Activated naive CD4-positive, alpha-beta T cell treated with anti-CD3 and anti-CD28 coated beads for 36 hours (primary cell): ENCODE measurements at regions of chr14 and their contacts with region 1.

Region 1: GRCh38 chr14:63543000-63543825 is at the start of gene PPP2R5E:
- DNase-seq: peak; percentile 99
- H3K4me3 Mint-ChIP-seq: peak within 1 kb of the TSS; percentile 96
- H3K27ac Mint-ChIP-seq: peak within 1 kb of the TSS; percentile 83
- H3K4me1 Mint-ChIP-seq: peaks cover 25% of the 10 kb centered on the region
- H3K27me3 Mint-ChIP-seq: no peaks in the 10 kb centered on the region
- total RNA-seq, gene PPP2R5E: 30.0 to 32.5 TPM

Region 2: GRCh38 chr14:63388763-63389431 is 154.3 kb before region 1 on chr14:
- CTCF ChIA-PET with region 1: interaction called, 5 read pairs
- intact Hi-C with region 1: loop called (anchors 1 kb)
- DNase-seq: peak; percentile 76
- H3K4me3 Mint-ChIP-seq: no peak overlapping the region
- H3K27ac Mint-ChIP-seq: no peak overlapping the region
- H3K4me1 Mint-ChIP-seq: no peaks in the 10 kb centered on the region
- H3K27me3 Mint-ChIP-seq: no peaks in the 10 kb centered on the region

Region 3: GRCh38 chr14:63470962-63471793 is 72.0 kb before region 1 on chr14:
- CTCF ChIA-PET with region 1: interaction called, 3 read pairs
- intact Hi-C with region 1: loop called (anchors 2 kb)
- DNase-seq: no peak
- H3K4me3 Mint-ChIP-seq: no peak overlapping the region
- H3K27ac Mint-ChIP-seq: no peak overlapping the region
- H3K4me1 Mint-ChIP-seq: peaks cover 60% of the 10 kb centered on the region
- H3K27me3 Mint-ChIP-seq: no peaks in the 10 kb centered on the region

Region 4: DNA sequence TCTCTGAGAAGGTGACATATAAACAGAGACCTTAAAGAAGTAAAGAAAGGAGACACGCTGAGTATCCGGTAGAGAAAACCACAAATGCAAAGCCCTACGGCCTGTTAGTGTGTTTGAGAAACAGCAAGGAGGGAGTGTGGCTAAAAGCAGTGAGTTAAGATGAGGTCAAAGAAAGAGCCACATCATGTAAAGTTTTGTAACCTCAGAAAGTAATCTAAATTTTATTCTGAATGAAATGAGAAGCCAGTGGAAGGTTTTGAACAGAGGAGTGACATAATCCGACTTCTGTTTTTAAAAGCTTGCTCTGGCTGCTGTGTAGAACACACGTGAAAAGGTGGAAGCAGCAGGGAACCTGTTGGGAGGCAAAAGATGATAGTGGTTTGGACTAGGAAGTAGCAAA is 32.7 kb before region 1 on chr14:
- CTCF ChIA-PET with region 1: interaction called, 3 read pairs
- intact Hi-C with region 1: loop called (anchors 2 kb)
- DNase-seq: peak; percentile 14
- H3K4me3 Mint-ChIP-seq: no peak overlapping the region
- H3K27ac Mint-ChIP-seq: peak overlapping the region; percentile 20
- H3K4me1 Mint-ChIP-seq: peaks cover 56% of the 10 kb centered on the region
- H3K27me3 Mint-ChIP-seq: no peaks in the 10 kb centered on the region

Region 5: DNA sequence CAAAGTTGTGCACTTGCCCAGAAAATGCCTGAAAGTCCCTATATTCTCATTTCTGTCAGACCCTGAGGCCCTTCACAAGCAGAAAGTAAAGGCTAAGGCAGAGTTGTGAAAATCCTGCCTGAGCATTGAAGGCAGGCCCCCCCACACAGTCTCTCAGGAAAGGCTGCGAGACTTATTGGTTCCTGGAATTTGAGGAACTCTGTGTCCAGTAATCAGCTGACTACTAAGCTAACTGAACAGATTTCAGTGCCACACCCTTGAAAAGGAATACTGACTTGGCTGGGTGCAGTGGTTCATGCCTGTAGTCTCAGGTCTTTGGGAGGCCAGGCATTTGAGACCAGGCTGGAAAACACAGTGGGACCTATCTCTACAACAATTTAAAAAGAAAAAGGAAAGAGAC is 21.1 kb after region 1 on chr14:
- CTCF ChIA-PET with region 1: no interaction called
- intact Hi-C with region 1: no loop called
- DNase-seq: no peak
- H3K4me3 Mint-ChIP-seq: no peak overlapping the region
- H3K27ac Mint-ChIP-seq: no peak overlapping the region
- H3K4me1 Mint-ChIP-seq: no peaks in the 10 kb centered on the region
- H3K27me3 Mint-ChIP-seq: no peaks in the 10 kb centered on the region

Region 6: DNA sequence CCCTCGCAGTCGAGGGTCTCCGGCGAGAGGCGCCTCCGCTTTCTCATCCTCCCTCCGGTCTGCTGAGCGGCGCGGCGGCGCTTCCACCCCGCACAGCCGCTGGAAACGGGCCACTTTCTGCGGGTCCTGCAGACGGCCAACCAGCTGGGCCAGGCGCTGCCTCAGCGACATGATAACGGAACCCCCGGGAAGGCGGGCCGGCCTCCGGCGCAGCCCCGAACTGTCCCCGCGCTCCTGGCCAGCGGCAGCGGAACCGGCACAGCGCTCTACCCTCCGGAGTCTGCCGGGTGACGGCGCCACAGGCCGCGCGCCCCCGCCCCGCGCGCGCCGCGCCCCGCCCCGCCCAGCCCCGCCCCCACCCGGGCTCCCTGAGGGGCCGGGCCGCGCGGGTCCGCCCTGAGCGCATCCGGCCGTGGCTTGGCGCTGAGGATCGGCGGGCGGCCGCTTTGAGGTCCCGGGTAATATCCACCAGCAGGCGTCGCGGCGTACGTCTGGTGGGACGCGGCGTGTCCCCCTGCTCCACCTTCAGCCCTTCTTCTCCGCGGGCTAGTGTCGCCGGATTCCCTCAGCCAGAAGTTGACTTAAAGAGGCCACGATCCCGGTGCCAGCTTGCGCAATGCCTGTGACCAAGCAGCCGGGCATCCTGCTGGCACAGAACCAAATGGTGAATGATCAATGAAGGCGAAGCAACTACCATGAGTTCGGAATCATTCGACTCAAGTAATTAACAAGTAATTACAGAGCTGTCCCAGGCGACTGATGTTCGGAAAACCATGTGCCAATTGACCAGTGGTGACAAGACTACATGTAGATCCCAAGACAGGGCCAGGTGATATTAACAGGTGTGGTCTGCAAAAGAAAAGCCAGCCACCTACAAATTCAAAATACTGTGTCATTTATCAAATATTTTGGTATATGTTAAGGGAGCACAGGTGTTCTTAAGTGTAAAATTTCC is 184.8 kb after region 1 on chr14 and contains the start of gene SGPP1:
- CTCF ChIA-PET with region 1: no interaction called
- intact Hi-C with region 1: loop called (anchors 1 kb)
- DNase-seq: peak; percentile 80
- H3K4me3 Mint-ChIP-seq: peak within 1 kb of the TSS; percentile 99
- H3K27ac Mint-ChIP-seq: peak within 1 kb of the TSS; percentile 83
- H3K4me1 Mint-ChIP-seq: peaks cover 30% of the 10 kb centered on the region
- H3K27me3 Mint-ChIP-seq: no peaks in the 10 kb centered on the region
- total RNA-seq, gene SGPP1: 10.1 to 10.6 TPM

Region 7: DNA sequence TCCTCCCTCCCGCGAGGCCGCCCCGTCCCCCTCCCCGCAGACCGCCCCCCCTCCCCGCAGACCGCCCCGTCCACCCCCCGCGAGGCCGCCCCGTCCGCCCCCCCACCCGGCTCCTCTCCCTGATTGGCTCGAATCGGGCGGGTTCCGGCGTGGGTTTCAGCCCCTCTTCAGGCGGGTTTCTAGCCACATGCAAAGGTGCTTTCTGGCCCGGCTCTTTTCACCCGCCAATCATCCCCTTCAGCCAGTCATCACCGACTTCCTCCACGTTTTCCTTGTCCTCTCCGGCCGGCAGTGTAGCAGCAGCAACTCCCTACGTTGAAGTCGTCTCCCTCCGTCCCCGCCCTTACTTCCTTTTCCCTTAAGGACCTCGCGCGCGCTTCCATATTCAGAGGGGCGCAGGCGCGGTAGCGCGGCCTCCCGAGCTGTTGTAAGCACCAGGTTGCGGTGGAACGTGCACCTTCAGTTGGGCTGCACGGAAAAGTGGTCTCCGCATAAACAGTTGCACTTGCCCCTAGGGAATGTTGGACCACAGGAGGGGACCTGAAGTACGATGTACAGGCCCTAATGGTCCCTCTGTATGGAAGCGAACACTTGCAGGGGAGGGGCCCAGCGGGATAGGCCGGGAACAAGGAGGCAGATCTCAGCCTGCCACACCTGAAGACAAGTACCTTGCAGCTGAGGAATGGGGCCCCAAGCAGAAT is 795.6 kb after region 1 on chr14:
- CTCF ChIA-PET with region 1: no interaction called
- intact Hi-C with region 1: loop called (anchors 2 kb)
- DNase-seq: peak; percentile 95
- H3K4me3 Mint-ChIP-seq: peak overlapping the region; percentile 92
- H3K27ac Mint-ChIP-seq: peak overlapping the region; percentile 86
- H3K4me1 Mint-ChIP-seq: peaks cover 19% of the 10 kb centered on the region
- H3K27me3 Mint-ChIP-seq: no peaks in the 10 kb centered on the region